ENCODE measurements at regions of chr13 and their contacts with region 1.

Region 1: DNA sequence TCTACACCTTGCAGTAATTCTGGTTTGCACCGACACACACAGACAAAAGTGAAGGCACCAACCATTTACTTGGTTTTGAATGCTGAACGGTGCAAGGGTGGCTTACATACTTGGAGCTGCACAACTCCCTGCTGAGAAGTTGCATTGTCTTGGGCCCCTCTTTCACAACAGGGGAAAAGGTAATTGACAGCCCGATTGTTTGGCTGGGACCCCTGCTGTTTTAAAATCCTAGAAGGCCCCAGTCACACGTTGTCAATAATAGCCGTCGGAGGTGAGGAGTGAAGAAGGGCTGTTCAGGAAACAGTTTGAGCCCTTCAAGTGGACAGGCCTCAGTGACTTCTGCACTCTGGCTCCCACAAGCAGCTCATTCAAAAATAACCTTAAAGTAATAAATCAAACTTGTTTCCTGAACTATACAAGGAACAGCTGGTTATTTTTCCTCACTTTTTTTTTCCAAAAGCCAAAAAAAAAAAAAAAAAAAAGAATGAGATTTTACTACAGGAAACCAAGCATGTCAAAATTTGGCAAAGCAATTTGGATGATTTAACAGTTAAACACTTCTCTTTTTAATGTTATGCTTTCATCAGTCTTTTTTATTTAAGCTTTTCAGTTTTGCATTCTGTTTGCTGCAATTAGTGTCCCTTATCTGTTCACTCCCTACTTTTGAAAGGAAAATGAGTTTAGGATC is 19.0 kb upstream of the SPRY2 start:
- DNase-seq: no peak
- H3K4me3 ChIP-seq: no peak overlapping the region
- H3K27ac ChIP-seq: no peak overlapping the region
- H3K4me1 ChIP-seq: no peaks in the 10 kb centered on the region
- H3K27me3 ChIP-seq: no peaks in the 10 kb centered on the region
- CTCF ChIP-seq: no peak
- EP300 ChIP-seq: no peak
- POLR2A ChIP-seq: no peak

Region 2: DNA sequence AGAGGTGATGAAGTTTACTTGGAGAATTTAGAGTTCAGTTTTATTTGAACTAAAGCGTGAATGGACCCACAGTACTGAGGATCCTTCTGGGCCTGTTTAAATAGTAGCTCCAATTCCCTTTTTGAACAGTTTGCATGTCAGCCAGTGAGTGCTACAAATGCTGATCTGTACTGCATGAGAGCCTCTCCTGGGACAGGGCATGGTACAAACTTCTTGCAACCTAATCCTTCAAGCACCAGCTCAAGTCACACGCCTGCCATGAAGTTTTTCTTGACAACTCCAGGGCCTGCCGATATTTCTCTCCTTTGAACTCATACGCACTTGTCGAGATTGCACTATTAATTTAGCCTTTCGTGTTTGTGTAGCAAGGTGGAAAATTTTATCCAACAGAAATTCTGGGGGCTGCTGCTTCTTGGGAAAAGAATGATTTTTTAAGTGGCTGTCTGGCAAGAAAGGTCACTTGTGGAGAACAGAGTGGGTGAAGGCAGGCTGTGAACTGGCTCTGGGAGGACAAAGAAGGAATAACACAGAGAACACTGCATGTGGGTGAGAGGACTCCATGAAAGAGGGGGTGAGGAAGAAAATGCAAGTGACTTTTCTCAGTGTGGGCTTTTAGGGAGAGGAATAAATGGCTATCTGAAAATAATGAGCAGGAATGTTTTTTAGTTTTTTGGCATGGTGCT is 686.5 kb before region 1 on chr13:
- intact Hi-C with region 1: loop called in 1 of 4 experiments (anchors 5 kb)
- DNase-seq: no peak
- H3K4me3 ChIP-seq: no peak overlapping the region
- H3K27ac ChIP-seq: no peak overlapping the region
- H3K4me1 ChIP-seq: peaks cover 12% of the 10 kb centered on the region
- H3K27me3 ChIP-seq: no peaks in the 10 kb centered on the region
- CTCF ChIP-seq: no peak
- EP300 ChIP-seq: no peak
- POLR2A ChIP-seq: no peak